WTC11 (cell line): ENCODE measurements at regions of chr19 and their contacts with region 1.

Region 1: GRCh38 chr19:56333505-56333904 is 18.9 kb upstream of the ZSCAN5A start:
- DNase-seq: peak; percentile 37
- ATAC-seq: peak; percentile 73
- H3K4me3 Mint-ChIP-seq: no peak overlapping the region
- H3K27ac Mint-ChIP-seq: no peak overlapping the region
- H3K4me1 Mint-ChIP-seq: no peaks in the 10 kb centered on the region
- H3K27me3 Mint-ChIP-seq: peaks cover 14% of the 10 kb centered on the region
- CTCF ChIP-seq: peak; percentile 41; the same call in 1 of the 2 replicates

Region 2: DNA sequence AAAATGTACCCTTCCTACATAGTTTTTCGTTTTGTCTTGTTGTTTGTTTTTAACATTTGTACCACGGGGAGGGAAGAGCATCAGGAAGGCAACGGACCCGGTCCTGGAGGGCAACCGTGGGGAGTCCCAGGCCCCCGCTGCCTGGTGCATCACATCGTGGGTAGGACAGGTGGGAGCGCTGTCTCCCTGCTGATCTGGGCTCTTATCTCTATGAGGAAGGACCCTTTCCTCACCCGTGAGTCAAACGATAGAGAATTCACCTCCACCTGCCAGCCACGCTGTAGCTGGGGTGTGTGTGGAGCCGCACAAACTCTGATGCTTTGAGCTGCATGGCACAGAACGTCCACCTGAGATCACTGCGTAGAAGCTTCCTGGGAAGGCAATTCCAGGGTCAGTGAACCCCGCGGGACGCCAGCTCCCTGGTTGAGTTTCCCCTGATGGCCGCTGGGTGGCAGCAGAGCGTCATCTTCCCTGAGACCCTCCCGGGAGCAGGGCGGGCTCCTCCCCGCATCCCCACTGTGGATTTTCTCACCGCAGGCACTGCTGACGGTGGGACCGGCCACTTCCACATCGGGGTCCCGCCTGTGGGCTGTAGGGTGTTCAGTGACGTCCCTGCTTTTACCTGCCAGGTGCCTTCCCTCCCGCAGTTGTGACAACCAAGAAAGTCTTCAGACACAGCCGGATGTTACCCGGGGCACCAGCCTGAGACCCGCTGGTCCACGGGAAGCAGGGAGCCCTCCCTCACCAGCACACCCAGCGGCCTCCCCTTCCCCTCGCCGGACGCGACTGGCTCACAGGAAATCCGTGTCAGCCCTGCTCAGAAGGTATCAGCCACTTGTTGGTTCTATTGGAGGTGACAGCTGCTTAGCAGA is 267.1 kb before region 1 on chr19:
- CTCF ChIA-PET with region 1: interaction called, 44 read pairs
- POLR2A ChIA-PET with region 1: no interaction called
- DNase-seq: peak; percentile 86
- ATAC-seq: peak; percentile 90
- H3K4me3 Mint-ChIP-seq: peak overlapping the region; percentile 59
- H3K27ac Mint-ChIP-seq: no peak overlapping the region
- H3K4me1 Mint-ChIP-seq: peaks cover 3% of the 10 kb centered on the region; the same call in 1 of the 2 replicates
- H3K27me3 Mint-ChIP-seq: peaks cover 24% of the 10 kb centered on the region
- CTCF ChIP-seq: peak; percentile 90

Region 3: GRCh38 chr19:56383826-56384605 is 50.5 kb after region 1 on chr19:
- CTCF ChIA-PET with region 1: no interaction called
- POLR2A ChIA-PET with region 1: no interaction called
- DNase-seq: no peak
- ATAC-seq: no peak
- H3K4me3 Mint-ChIP-seq: no peak overlapping the region
- H3K27ac Mint-ChIP-seq: no peak overlapping the region
- H3K4me1 Mint-ChIP-seq: no peaks in the 10 kb centered on the region
- H3K27me3 Mint-ChIP-seq: 0 out of 2 replicates have a peak, but pooled peaks cover 4% of the 10 kb centered on the region
- CTCF ChIP-seq: no peak